ENCODE measurements at regions of chr4 and their contacts with region 1.

Region 1: DNA sequence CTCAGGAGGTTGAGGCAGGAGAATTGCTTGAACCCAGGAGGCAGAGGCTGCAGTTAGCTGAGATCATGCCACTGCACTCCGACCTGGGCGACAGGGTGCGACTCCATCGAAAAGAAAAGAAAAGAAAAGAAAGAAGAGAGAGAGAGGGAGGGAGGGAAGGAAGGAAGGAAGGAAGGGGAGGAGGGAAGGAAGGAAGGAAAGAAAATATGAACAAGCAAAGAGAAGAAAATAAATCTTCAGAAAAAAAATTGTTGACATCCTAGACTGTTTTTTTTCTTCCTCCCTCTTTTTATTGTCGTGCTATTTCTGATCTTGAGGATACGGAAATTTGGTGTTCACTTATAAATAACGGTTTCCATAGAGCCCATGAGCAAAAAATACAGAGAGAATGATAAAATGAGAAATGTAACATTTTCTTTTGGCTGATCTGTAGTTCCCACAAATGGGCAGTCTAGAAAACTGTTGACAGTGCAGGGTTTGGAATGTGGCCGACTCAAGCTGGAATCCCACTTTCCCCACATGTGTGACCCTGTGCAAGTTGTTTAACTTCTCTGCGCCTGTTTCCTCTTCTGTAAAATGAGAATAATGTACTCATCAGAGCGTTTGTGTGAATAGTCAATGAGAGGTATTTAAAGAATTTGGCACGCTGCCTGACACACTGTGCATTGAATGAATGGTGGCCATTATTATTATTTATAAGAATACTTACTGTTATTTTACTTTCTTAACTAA is 19.4 kb downstream of the SORBS2 start:
- DNase-seq: peak; percentile 99
- H3K4me3 ChIP-seq: peak overlapping the region in 1 of 3 experiments; percentile 34
- H3K27ac ChIP-seq: peak overlapping the region; percentile 85
- H3K4me1 ChIP-seq: peaks cover 22% of the 10 kb centered on the region
- H3K27me3 ChIP-seq: no peaks in the 10 kb centered on the region
- CTCF ChIP-seq: no peak
- POLR2A ChIP-seq: peak; percentile 46

Region 2: GRCh38 chr4:185833055-185833598 is 40.6 kb after region 1 on chr4:
- CTCF ChIA-PET with region 1: interaction called, 3 read pairs
- POLR2A ChIA-PET with region 1: no interaction called
- dilution Hi-C with region 1: no loop called
- intact Hi-C with region 1: loop called (anchors 1 kb)
- DNase-seq: peak; percentile 92
- H3K4me3 ChIP-seq: no peak overlapping the region
- H3K27ac ChIP-seq: peak overlapping the region; percentile 67
- H3K4me1 ChIP-seq: peaks cover 26% of the 10 kb centered on the region
- H3K27me3 ChIP-seq: no peaks in the 10 kb centered on the region
- CTCF ChIP-seq: no peak
- POLR2A ChIP-seq: no peak

Region 3: DNA sequence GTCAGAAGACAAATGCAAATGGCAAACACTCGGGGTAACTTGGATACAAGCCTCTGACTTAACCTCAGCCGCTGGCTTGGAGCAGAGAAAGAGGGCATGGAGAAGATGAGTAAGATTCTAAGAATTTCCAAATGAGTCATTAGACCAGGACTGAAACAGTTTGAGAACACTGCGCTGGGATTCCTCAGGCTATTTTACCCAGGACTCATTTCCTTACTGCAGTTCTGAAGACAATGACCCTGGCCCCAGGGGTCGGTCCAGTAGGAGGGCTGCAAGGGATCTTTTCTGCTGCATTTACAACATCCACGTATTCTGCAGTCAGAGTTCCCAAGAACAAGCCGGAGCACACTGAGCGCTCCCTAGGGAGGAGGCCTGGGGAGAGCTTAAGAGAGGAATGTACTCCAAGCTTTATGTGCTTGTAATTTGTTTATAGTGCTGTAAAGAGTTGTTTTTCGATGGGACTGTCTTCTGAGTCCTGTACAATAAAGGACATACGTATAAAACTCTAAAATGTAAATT is 46.7 kb after region 1 on chr4:
- CTCF ChIA-PET with region 1: interaction called, 3 read pairs
- POLR2A ChIA-PET with region 1: no interaction called
- dilution Hi-C with region 1: no loop called
- intact Hi-C with region 1: loop called (anchors 1 kb)
- DNase-seq: peak; percentile 95
- H3K4me3 ChIP-seq: no peak overlapping the region
- H3K27ac ChIP-seq: peak overlapping the region; percentile 77
- H3K4me1 ChIP-seq: peaks cover 36% of the 10 kb centered on the region
- H3K27me3 ChIP-seq: no peaks in the 10 kb centered on the region
- CTCF ChIP-seq: no peak
- POLR2A ChIP-seq: no peak

Measured in endothelial cell of umbilical vein (primary cell).